ENCODE measurements at regions of chr14 and their contacts with region 1.

Region 1: DNA sequence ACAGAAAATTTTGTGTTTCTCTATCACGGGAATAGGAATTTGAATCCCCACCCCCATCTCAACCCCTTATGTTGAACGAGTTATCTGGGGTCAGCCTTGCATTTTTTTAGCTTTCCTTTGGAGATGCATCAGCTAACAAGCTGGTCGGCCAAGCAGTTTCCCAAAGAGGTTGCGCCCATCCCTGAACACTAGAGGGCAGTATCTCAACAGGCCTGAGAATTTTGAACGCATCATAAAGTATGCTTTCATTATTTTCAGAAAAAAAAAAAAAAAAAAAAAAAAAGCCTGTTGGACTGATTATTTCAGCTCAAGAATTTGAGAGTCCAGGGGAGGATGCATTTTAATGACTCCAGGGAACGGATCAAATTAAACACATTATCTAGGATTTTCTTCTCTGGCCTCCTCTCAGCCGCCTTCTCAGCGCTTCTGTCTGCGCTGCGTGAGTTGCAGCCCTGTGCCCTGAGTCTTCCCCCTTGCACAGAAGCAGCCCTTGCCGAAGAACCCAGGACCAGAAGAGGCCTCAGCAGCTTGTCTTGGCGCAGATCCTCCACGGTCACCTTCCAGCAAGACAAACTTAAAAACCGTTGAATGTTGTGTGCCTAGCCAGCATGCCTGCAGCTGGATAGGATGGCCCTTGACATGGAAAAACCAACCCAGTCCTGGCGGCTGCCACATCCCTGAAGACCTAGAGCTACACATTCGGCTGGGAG is 76.6 kb upstream of the GZMB start:
- DNase-seq: peak; percentile 72
- ATAC-seq: peak; percentile 63
- H3K4me3 Mint-ChIP-seq: no peak overlapping the region
- H3K27ac Mint-ChIP-seq: no peak overlapping the region
- H3K4me1 Mint-ChIP-seq: peaks cover 6% of the 10 kb centered on the region
- H3K27me3 Mint-ChIP-seq: peaks cover 6% of the 10 kb centered on the region

Region 2: DNA sequence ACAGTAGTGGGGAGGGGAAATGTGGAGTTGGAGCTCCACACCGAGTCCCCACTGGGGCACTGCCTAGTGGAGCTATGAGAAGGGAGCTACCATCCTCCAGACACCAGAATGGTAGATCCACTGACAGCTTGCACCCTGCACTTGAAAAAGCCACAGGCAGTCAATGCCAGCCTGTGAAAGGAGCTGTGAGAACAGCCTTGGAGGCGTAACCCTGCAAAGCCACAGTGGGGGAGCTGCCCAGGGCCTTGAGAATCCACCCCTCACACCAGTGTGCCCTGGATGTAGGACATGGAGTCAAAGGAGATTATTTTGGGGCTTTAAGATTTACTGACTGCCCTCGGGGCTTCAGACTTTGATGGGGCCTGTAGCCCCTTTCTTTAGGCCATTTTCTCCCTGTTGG is 147.1 kb before region 1 on chr14:
- CTCF ChIA-PET with region 1: no interaction called
- POLR2A ChIA-PET with region 1: no interaction called
- intact Hi-C with region 1: no loop called
- DNase-seq: no peak
- ATAC-seq: no peak
- H3K4me3 Mint-ChIP-seq: no peak overlapping the region
- H3K27ac Mint-ChIP-seq: no peak overlapping the region
- H3K4me1 Mint-ChIP-seq: no peaks in the 10 kb centered on the region
- H3K27me3 Mint-ChIP-seq: peaks cover 12% of the 10 kb centered on the region

Region 3: GRCh38 chr14:24673534-24674203 is 36.9 kb before region 1 on chr14:
- CTCF ChIA-PET with region 1: interaction called, 14 read pairs
- POLR2A ChIA-PET with region 1: no interaction called
- intact Hi-C with region 1: no loop called
- DNase-seq: peak; percentile 82
- ATAC-seq: peak; percentile 72
- H3K4me3 Mint-ChIP-seq: peak overlapping the region; percentile 66
- H3K27ac Mint-ChIP-seq: peak overlapping the region; percentile 99
- H3K4me1 Mint-ChIP-seq: peaks cover 85% of the 10 kb centered on the region
- H3K27me3 Mint-ChIP-seq: no peaks in the 10 kb centered on the region

Region 4: DNA sequence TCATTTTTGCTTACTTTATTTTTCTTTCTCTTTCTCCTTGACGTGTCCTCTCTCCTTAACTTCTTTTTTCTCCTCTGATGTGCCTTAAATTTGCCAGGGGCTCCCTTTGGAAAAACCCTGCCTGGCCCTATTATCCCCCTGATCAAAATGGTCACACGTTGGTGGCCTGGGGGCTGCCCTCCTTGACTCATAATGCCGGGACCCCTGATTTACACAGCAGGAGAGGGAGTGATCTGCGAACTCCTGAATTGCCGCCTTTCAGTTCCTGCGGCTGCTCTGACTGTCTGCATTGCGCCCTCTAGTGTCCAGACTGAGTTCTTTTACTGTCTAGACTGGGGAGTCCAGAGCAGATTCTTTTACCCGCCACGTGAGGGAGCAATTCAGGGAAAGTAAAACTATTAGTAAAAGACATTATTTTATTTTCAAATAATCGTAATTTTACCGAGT is 31.7 kb before region 1 on chr14:
- CTCF ChIA-PET with region 1: interaction called, 14 read pairs
- POLR2A ChIA-PET with region 1: no interaction called
- intact Hi-C with region 1: no loop called
- DNase-seq: peak; percentile 87
- ATAC-seq: peak; percentile 66
- H3K4me3 Mint-ChIP-seq: peak overlapping the region; percentile 69
- H3K27ac Mint-ChIP-seq: peak overlapping the region; percentile 95
- H3K4me1 Mint-ChIP-seq: peaks cover 61% of the 10 kb centered on the region
- H3K27me3 Mint-ChIP-seq: peaks cover 4% of the 10 kb centered on the region

Region 5: DNA sequence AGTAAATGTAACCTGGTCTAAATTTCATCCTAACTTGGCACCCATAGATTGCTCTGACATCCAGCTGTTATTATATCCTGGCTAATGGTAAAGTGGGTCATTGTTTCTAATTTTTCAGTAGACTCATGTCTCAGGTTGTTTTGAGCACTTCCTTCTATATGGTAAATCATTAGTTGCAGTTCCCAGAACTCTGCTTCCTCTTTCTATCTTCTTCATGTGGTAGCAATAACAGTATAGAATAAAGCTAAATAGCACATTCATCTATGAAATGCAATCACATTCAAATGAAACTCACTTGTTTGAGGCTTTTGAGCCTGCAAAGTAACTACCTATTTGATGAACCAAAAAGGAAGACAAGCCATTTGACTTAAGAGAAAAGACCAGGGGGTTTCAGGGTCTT is 11.5 kb before region 1 on chr14:
- CTCF ChIA-PET with region 1: interaction called, 16 read pairs
- POLR2A ChIA-PET with region 1: no interaction called
- intact Hi-C with region 1: no loop called
- DNase-seq: no peak
- ATAC-seq: no peak
- H3K4me3 Mint-ChIP-seq: no peak overlapping the region
- H3K27ac Mint-ChIP-seq: no peak overlapping the region
- H3K4me1 Mint-ChIP-seq: peaks cover 3% of the 10 kb centered on the region
- H3K27me3 Mint-ChIP-seq: no peaks in the 10 kb centered on the region

Region 6: GRCh38 chr14:24721775-24722174 is 11.2 kb after region 1 on chr14:
- CTCF ChIA-PET with region 1: interaction called, 23 read pairs
- POLR2A ChIA-PET with region 1: no interaction called
- intact Hi-C with region 1: no loop called
- DNase-seq: no peak
- ATAC-seq: no peak
- H3K4me3 Mint-ChIP-seq: no peak overlapping the region
- H3K27ac Mint-ChIP-seq: no peak overlapping the region
- H3K4me1 Mint-ChIP-seq: no peaks in the 10 kb centered on the region
- H3K27me3 Mint-ChIP-seq: peaks cover 21% of the 10 kb centered on the region

Region 7: GRCh38 chr14:25132732-25133422 is 422.3 kb after region 1 on chr14:
- CTCF ChIA-PET with region 1: interaction called, 12 read pairs
- POLR2A ChIA-PET with region 1: no interaction called
- intact Hi-C with region 1: loop called (anchors 1 kb)
- DNase-seq: peak; percentile 67
- ATAC-seq: peak; percentile 91
- H3K4me3 Mint-ChIP-seq: no peak overlapping the region
- H3K27ac Mint-ChIP-seq: no peak overlapping the region
- H3K4me1 Mint-ChIP-seq: peaks cover 3% of the 10 kb centered on the region
- H3K27me3 Mint-ChIP-seq: peaks cover 33% of the 10 kb centered on the region

Region 8: DNA sequence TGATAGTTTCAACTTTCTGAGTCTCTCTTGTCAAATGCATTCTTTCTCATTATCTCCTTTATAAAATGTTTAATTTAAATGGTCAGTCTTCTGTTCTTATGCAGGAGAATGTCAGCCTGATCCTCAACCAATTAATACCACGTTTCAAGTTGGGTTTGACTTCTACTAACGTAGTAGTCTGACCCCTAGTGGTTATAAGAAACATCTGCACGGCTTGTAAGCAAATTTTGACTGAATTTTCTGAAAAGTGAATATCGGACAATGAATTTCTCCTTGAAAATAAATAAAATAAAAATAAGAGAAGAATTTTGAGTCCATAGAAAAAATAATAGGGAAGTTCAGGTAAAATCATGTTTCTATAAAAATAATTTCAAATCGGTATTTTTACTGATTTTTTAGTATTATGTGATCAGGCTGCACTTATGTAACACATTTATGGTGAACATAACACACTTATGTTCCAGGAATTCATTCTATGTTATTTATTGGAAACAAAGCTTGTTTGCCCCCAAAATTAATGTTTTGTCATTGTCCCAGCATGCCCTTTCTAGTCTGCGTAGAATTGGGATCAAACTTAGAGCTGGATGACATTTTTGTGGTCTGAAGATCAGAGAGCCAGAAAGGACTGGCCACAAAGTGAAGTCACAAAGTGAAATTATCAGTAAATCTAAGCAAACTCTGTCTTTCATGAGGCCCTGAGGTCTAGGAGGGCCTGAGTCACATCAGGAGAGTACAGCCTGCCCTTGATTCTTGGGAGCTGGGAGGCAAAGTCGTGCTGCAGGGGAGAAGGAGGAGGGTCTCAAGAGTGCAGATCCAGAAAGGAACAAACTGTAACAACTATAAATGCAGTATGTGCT is 440.6 kb after region 1 on chr14:
- CTCF ChIA-PET with region 1: interaction called, 8 read pairs
- POLR2A ChIA-PET with region 1: no interaction called
- intact Hi-C with region 1: loop called in 1 of 2 experiments (anchors 2 kb)
- DNase-seq: no peak
- ATAC-seq: no peak
- H3K4me3 Mint-ChIP-seq: no peak overlapping the region
- H3K27ac Mint-ChIP-seq: no peak overlapping the region
- H3K4me1 Mint-ChIP-seq: no peaks in the 10 kb centered on the region
- H3K27me3 Mint-ChIP-seq: peaks cover 12% of the 10 kb centered on the region